MCF 10A (cell line): ENCODE measurements at regions of chr11 and their contacts with region 1.

Region 1: DNA sequence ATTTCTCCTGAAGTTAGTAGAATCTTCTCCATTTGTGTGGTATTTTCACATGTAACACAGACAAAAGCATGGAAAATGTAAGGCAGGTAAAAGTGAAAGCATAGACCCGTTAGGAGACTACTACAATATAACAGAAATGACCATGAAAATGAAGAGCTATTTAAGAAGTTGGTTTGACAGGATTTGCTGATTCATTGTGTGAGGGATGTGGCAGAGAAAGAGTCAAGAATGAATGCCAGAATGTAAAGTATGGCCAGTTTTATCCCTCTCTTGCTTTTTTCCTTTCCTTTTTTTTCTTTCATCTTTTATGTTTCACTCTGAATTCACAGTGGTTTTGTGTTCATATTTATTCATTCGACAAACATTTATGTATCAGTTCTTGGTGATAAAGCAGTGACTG is 115.9 kb downstream of the ARFGAP2 start:
- DNase-seq: no peak
- H3K4me3 Mint-ChIP-seq: no peak overlapping the region
- H3K27ac Mint-ChIP-seq: no peak overlapping the region
- H3K4me1 Mint-ChIP-seq: peaks cover 4% of the 10 kb centered on the region
- H3K27me3 Mint-ChIP-seq: no peaks in the 10 kb centered on the region
- CTCF ChIP-seq: no peak

Region 2: DNA sequence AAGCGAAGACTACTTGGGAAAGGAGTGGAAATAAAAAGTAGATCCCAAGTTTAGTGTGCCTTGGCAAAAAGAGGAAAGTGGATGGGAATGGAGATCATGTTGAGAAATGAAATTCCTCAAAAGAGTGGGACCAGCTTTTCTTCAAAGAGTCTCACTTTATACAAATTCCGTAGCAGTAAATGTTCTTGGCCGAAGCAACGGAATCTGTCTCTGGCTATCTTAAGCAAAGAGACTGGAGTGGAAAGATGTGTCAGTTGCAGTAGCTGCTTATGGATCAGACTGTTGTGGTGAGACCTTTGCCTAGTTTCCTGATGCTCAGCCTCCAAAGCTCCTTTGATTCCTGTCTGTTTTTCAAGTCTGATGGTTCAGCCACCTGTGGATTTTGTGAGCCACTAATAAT is 50.6 kb before region 1 on chr11:
- CTCF ChIA-PET with region 1: no interaction called
- POLR2A ChIA-PET with region 1: no interaction called
- intact Hi-C with region 1: no loop called
- DNase-seq: no peak
- H3K4me3 Mint-ChIP-seq: no peak overlapping the region
- H3K27ac Mint-ChIP-seq: no peak overlapping the region
- H3K4me1 Mint-ChIP-seq: peaks cover 3% of the 10 kb centered on the region
- H3K27me3 Mint-ChIP-seq: no peaks in the 10 kb centered on the region
- CTCF ChIP-seq: no peak

Region 3: DNA sequence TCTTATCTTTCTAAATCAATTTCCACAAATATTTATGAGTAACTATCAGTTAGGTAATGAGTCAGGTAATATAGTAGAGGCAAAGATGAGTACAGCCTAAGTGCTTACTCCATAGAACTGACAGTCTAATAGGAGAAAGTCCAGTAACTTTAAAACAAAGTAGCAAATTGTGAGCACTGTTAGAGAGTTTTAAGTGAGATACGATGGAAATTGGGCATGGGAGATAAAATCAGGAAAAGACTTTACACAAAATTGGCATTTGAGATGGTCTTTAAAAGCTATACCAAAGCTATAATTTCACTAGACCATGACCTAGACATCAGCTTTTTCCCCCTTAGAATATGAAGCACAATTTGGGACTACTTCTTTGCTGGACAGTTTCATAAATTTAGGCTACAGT is 10.5 kb before region 1 on chr11:
- CTCF ChIA-PET with region 1: interaction called, 12 read pairs
- POLR2A ChIA-PET with region 1: no interaction called
- intact Hi-C with region 1: no loop called
- DNase-seq: no peak
- H3K4me3 Mint-ChIP-seq: no peak overlapping the region
- H3K27ac Mint-ChIP-seq: no peak overlapping the region
- H3K4me1 Mint-ChIP-seq: no peaks in the 10 kb centered on the region
- H3K27me3 Mint-ChIP-seq: no peaks in the 10 kb centered on the region
- CTCF ChIP-seq: no peak

Region 4: DNA sequence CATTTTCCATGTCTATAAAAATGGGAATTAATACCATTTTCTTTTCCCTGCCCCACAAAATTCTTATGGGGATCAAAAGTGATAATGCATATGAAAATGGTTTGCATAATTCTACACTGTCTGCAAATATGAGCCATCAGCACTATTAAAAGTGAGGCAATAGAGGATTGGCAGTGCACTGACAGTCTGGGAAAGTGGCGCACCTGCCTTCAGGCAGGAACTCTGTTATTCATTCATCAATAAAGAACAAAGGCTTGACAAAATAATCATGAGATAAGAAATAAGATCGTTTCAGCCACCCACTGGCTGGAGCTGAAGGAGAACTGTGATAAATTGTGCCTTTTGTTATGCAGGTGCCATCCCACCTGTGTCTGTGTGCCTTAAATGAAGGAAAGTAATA is 66.4 kb after region 1 on chr11:
- CTCF ChIA-PET with region 1: no interaction called
- POLR2A ChIA-PET with region 1: no interaction called
- intact Hi-C with region 1: no loop called
- DNase-seq: no peak
- H3K4me3 Mint-ChIP-seq: no peak overlapping the region
- H3K27ac Mint-ChIP-seq: no peak overlapping the region
- H3K4me1 Mint-ChIP-seq: no peaks in the 10 kb centered on the region
- H3K27me3 Mint-ChIP-seq: no peaks in the 10 kb centered on the region
- CTCF ChIP-seq: no peak

Region 5: DNA sequence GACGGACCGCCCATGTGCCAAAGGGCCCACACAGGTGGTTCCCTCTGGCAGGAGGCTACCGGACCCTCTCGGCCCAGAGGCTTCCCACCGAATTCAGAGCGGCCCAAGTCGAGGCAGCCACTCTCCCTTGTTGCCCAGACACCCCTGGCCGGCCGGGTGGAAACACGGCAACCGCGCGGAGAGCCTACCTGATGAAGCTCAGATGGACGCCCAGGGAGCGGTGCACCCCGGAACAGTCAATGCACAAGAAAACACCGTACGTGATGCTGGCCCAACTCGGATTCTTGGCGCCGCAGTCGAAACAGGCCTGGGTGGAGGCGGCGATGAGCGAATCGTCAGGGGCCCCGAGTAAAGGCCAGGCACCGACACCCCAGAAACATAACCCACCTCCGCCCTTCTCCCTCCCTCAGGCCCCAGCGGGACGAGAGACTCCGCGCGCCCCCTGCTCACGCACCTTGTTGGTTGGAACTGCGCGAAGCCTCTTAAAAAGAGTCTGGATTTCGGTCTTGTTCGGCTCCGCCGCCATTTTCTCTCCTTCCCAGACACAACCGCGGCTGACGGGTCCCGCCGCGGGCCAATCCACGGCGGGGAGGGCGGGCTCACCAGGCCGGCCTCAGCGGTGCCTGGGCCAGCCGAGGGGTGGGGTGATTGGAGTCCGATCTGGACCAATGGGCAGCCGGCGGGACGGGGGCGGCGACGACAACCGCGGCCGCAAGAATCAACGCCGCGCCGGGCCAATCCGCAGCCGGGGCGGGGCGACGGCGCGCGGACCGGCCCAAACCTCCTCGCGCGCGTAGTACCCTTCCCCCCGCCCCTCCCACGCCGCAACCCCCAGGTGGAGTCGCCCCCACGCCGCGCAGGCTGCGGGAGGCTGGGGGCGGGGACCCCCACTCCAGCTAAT is 115.8 kb after region 1 on chr11 and contains the start of gene ARFGAP2:
- CTCF ChIA-PET with region 1: no interaction called
- POLR2A ChIA-PET with region 1: no interaction called
- intact Hi-C with region 1: no loop called
- DNase-seq: peak; percentile 95
- H3K4me3 Mint-ChIP-seq: peak within 1 kb of the TSS; percentile 93
- H3K27ac Mint-ChIP-seq: peak within 1 kb of the TSS; percentile 99
- H3K4me1 Mint-ChIP-seq: peaks cover 17% of the 10 kb centered on the region
- H3K27me3 Mint-ChIP-seq: no peaks in the 10 kb centered on the region
- CTCF ChIP-seq: no peak
- total RNA-seq, gene ARFGAP2: 78.0 and 81.4 TPM in 2 replicates